GM10248 (cell line): ENCODE measurements at regions of chr7 and their contacts with region 1.

Region 1: GRCh38 chr7:56051339-56052191 is at the starts of genes CCT6A and PSPH:
- DNase-seq: peak; percentile 95
- CTCF ChIP-seq: no peak

Region 2: DNA sequence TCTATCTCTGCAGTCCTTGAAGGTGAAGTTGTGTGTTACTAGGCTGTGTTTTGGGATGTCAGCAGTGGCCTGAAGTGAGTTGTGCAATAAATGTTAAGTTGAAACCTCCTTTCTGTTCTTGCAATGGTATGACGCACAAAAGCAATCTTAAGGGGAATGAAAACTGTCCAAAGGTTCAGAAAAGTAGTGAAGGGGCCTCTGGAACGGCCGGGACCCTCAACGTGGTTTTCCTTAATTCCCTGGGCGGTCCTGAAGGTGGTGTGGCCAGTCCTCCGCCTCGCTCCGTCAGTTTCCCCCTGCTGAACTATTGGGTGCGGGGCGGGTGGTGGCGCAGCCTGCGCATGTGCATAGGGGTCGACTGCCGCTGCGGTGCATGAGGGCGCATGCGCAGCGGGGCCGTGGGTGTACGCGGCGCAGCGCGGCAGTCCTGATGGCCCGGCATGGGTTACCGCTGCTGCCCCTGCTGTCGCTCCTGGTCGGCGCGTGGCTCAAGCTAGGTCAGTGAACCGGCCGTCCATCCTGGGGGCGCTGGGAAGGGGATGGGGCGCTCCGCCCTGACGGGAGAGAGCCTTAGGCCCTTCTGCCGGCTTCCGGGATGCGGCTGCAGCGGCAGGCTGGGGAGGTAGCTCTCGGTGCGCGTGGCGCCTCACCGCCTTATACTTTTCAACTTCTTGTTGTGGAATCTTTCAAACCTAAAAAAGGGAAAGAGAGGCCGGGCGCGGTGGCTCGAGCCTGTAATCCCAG is 12.5 kb after region 1 on chr7 and contains the start of gene SUMF2:
- CTCF ChIA-PET with region 1: interaction called, 14 read pairs
- POLR2A ChIA-PET with region 1: interaction called, 17 read pairs
- DNase-seq: peak; percentile 98
- CTCF ChIP-seq: no peak